ENCODE measurements at regions of chr3 and their contacts with region 1.

Region 1: GRCh38 chr3:156535162-156535627 is 19.7 kb downstream of the SSR3 start:
- DNase-seq: peak in 4 of 5 donors; percentile 58 to 89 (median 74)
- ATAC-seq: peak; percentile 81 to 96 (median 94)
- H3K4me3 ChIP-seq: no peak overlapping the region
- H3K27ac ChIP-seq: peak overlapping the region; percentile 16 to 84 (median 68)
- H3K4me1 ChIP-seq: peaks cover 0 to 31% (median 15%) of the 10 kb centered on the region in 12 donors
- H3K27me3 ChIP-seq: no peaks in the 10 kb centered on the region
- CTCF ChIP-seq: peak in 7 of 12 donors; percentile 12 to 46 (median 37)
- POLR2A ChIP-seq: no peak

Region 2: GRCh38 chr3:156040041-156040440 is 495.2 kb before region 1 on chr3:
- intact Hi-C with region 1: loop called in 1 of 10 experiments (anchors 10 kb)
- DNase-seq: no peak
- ATAC-seq: no peak
- H3K4me3 ChIP-seq: no peak overlapping the region
- H3K27ac ChIP-seq: no peak overlapping the region
- H3K4me1 ChIP-seq: no peaks in the 10 kb centered on the region
- H3K27me3 ChIP-seq: no peaks in the 10 kb centered on the region
- CTCF ChIP-seq: no peak
- POLR2A ChIP-seq: no peak

Region 3: DNA sequence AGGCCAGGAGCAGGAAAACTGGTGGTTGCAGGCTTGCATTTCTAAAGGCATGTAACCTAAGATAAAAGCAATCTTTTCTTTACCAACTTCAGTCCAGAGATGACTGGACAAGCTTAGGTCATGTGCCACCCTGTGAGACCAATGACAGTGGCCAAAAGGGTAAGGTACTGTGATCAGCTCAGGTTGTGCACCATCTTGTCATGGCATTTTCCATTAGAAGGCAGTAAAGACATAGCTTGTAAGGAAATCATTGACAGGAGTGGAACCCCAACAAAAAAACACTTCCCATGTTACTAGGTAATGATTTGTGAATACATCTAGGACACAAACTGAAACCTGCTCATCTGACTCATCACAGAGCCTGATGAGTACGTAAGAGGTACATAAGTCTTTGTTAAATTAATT is 15.4 kb before region 1 on chr3:
- intact Hi-C with region 1: no loop called
- DNase-seq: no peak
- ATAC-seq: no peak
- H3K4me3 ChIP-seq: no peak overlapping the region
- H3K27ac ChIP-seq: peak overlapping the region in 1 of 12 donors; percentile 49
- H3K4me1 ChIP-seq: peaks cover 0 to 18% (median 8%) of the 10 kb centered on the region in 12 donors
- H3K27me3 ChIP-seq: no peaks in the 10 kb centered on the region
- CTCF ChIP-seq: no peak
- POLR2A ChIP-seq: no peak

Region 4: GRCh38 chr3:156826144-156826895 is 291.1 kb after region 1 on chr3 and contains the start of gene LEKR1:
- intact Hi-C with region 1: loop called in 1 of 10 experiments (anchors 10 kb)
- DNase-seq: peak; percentile 89 to 93 (median 91)
- ATAC-seq: peak; percentile 85 to 98 (median 96)
- H3K4me3 ChIP-seq: peak within 1 kb of the TSS; percentile 56 to 94 (median 67)
- H3K27ac ChIP-seq: peak within 1 kb of the TSS; percentile 83 to 96 (median 89)
- H3K4me1 ChIP-seq: peaks cover 0 to 17% (median 6%) of the 10 kb centered on the region in 12 donors
- H3K27me3 ChIP-seq: no peaks in the 10 kb centered on the region
- CTCF ChIP-seq: peak in 1 of 12 donors; percentile 4
- POLR2A ChIP-seq: peak; percentile 14 to 72
- total RNA-seq, gene LEKR1: 0.23 to 1.8 (median 1.0) TPM in 8 of 9 donors, not detected in the other

Measured in heart left ventricle (tissue), 16 donors.